OCI-LY7 (cell line): ENCODE measurements at regions of chr2 and their contacts with region 1.

Region 1: DNA sequence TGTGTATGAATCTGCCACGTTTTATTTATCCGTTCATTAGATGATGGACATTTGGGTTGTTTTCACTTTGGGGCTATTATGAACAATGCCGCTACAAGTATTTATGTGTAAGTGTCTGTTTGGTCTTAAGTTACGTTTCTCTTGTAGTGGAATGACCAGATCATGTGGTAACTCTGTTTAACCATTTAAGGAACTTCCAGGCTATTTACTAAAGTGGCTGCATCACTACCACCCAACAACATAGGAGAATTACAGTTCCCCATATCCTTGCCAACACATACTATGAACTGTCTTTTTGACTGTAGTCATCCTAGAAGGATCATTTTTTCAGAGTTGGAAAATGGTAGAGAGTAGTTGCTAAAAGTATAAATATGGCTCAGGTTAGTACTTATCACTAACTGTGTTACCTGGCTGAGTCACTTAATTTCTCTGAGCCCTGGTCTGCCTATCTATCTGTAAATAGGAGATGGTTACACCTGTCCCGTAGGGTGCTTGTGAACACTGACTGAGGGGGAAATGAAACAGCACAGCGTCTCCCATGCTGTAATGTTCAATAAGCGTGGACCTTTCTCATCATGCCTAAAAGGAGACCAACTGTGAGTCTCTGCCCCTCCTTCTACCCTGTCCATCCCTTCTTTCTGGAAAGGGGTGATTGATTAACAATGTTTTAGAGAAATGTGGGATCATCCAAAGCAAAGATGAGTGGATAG is 103.1 kb downstream of the SH3RF3 start:
- DNase-seq: no peak
- H3K4me3 ChIP-seq: no peak overlapping the region
- H3K27ac ChIP-seq: no peak overlapping the region
- H3K4me1 ChIP-seq: no peaks in the 10 kb centered on the region
- CTCF ChIP-seq: no peak

Region 2: GRCh38 chr2:109213646-109214417 is 18.3 kb before region 1 on chr2:
- CTCF ChIA-PET with region 1: no interaction called
- POLR2A ChIA-PET with region 1: interaction called, 4 read pairs
- intact Hi-C with region 1: loop called (anchors 2 kb)
- DNase-seq: no peak
- H3K4me3 ChIP-seq: no peak overlapping the region
- H3K27ac ChIP-seq: no peak overlapping the region
- H3K4me1 ChIP-seq: no peaks in the 10 kb centered on the region
- CTCF ChIP-seq: no peak